ENCODE measurements at regions of chr17 and their contacts with region 1.

Region 1: GRCh38 chr17:50478391-50479381 is at the start of gene RSAD1:
- DNase-seq: peak; percentile 90
- ATAC-seq: peak; percentile 94
- H3K4me3 Mint-ChIP-seq: peak within 1 kb of the TSS; percentile 89
- H3K27ac Mint-ChIP-seq: peak within 1 kb of the TSS; percentile 93
- H3K4me1 Mint-ChIP-seq: peaks cover 22% of the 10 kb centered on the region
- H3K27me3 Mint-ChIP-seq: peaks cover 3% of the 10 kb centered on the region
- CTCF ChIP-seq: peak; percentile 86
- total RNA-seq, gene RSAD1: 39.2 to 40.7 TPM

Region 2: DNA sequence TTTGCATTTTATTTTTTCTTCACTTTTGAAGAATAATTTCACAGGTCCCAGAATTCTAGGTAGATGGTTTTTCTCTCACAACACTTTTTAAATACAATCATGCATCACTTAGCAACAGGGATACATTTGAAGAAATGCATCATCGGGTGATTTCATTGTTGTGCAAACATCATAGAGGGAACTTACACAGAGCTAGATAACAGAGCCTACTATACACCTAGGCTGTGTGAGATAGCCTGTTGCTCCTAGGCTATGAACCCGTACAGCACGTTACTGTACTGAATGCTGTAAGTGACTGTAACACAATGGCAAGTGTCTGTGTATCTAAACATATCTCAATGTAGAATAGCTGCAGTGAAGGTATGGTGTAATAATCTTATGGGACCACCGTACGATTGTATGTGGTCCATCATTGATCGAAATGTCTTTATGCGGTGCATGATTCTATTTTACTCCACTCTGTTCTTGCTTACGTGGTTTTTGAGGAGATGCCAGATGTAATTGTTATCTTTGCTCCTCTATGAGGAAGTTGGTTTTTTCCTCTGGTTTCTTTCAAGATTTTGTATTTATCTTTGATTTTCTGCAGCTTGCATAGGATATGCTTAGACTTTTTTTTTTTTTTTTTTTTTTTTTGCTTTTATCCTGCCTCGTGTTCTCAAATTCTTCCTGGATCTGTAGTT is 239.9 kb before region 1 on chr17:
- CTCF ChIA-PET with region 1: no interaction called
- POLR2A ChIA-PET with region 1: no interaction called
- intact Hi-C with region 1: no loop called
- DNase-seq: no peak
- ATAC-seq: no peak
- H3K4me3 Mint-ChIP-seq: no peak overlapping the region
- H3K27ac Mint-ChIP-seq: no peak overlapping the region
- H3K4me1 Mint-ChIP-seq: no peaks in the 10 kb centered on the region
- H3K27me3 Mint-ChIP-seq: peaks cover 36% of the 10 kb centered on the region
- CTCF ChIP-seq: no peak

Region 3: DNA sequence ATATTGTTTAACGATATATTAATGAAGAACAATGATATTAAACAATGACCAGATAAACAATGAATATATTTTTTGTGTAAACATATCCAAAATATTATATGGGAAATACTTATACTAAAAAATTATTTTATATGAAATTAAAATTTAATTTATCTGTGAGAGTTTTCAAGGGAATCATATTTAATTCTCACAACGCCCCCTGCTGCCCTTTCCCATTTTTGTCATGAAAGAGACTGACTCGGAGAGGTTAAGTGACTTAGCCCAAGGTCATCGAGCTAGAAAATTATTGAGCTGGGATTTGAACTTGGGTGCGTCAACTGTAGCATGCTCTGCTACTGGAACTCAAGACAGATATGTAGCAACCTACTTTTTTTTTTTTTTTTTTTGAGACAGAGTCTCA is 22.4 kb after region 1 on chr17:
- CTCF ChIA-PET with region 1: interaction called, 50 read pairs
- POLR2A ChIA-PET with region 1: interaction called, 3 read pairs
- intact Hi-C with region 1: no loop called
- DNase-seq: peak; percentile 65
- ATAC-seq: no peak
- H3K4me3 Mint-ChIP-seq: no peak overlapping the region
- H3K27ac Mint-ChIP-seq: no peak overlapping the region
- H3K4me1 Mint-ChIP-seq: peaks cover 22% of the 10 kb centered on the region
- H3K27me3 Mint-ChIP-seq: no peaks in the 10 kb centered on the region
- CTCF ChIP-seq: peak; percentile 48

Region 4: GRCh38 chr17:50508573-50509470 is 30.1 kb after region 1 on chr17:
- CTCF ChIA-PET with region 1: interaction called, 50 read pairs
- POLR2A ChIA-PET with region 1: interaction called, 4 read pairs
- intact Hi-C with region 1: no loop called
- DNase-seq: no peak
- ATAC-seq: no peak
- H3K4me3 Mint-ChIP-seq: peak overlapping the region; percentile 97
- H3K27ac Mint-ChIP-seq: peak overlapping the region; percentile 89
- H3K4me1 Mint-ChIP-seq: peaks cover 50% of the 10 kb centered on the region
- H3K27me3 Mint-ChIP-seq: no peaks in the 10 kb centered on the region
- CTCF ChIP-seq: no peak

Region 5: GRCh38 chr17:50541716-50542688 is 63.3 kb after region 1 on chr17:
- CTCF ChIA-PET with region 1: interaction called, 16 read pairs
- POLR2A ChIA-PET with region 1: no interaction called
- intact Hi-C with region 1: loop called (anchors 5 kb)
- DNase-seq: peak; percentile 83
- ATAC-seq: peak; percentile 87
- H3K4me3 Mint-ChIP-seq: peak overlapping the region; percentile 53
- H3K27ac Mint-ChIP-seq: peak overlapping the region; percentile 34
- H3K4me1 Mint-ChIP-seq: peaks cover 11% of the 10 kb centered on the region
- H3K27me3 Mint-ChIP-seq: peaks cover 2% of the 10 kb centered on the region
- CTCF ChIP-seq: peak; percentile 45

Region 6: DNA sequence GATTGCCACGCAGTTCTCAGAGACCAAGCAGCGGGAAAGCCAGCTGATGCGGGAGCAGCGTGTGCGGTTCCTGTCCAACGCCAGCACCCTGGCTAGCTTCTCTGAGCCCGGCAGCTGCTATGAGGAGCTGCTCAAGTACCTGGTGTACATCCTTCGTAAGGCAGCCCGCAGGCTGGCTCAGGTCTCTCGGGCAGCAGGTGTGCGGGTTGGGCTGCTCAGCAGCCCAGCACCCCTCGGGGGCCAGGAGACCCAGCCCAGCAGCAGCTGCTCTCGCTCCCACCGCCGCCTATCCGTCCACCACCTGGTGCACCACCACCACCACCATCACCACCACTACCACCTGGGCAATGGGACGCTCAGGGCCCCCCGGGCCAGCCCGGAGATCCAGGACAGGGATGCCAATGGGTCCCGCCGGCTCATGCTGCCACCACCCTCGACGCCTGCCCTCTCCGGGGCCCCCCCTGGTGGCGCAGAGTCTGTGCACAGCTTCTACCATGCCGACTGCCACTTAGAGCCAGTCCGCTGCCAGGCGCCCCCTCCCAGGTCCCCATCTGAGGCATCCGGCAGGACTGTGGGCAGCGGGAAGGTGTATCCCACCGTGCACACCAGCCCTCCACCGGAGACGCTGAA is 97.0 kb after region 1 on chr17:
- CTCF ChIA-PET with region 1: no interaction called
- POLR2A ChIA-PET with region 1: no interaction called
- intact Hi-C with region 1: no loop called
- DNase-seq: peak; percentile 25
- ATAC-seq: no peak
- H3K4me3 Mint-ChIP-seq: no peak overlapping the region
- H3K27ac Mint-ChIP-seq: no peak overlapping the region
- H3K4me1 Mint-ChIP-seq: no peaks in the 10 kb centered on the region
- H3K27me3 Mint-ChIP-seq: peaks cover 2% of the 10 kb centered on the region
- CTCF ChIP-seq: no peak